ENCODE measurements at regions of chr17 and their contacts with region 1.

Region 1: GRCh38 chr17:18038861-18039534 is at the starts of genes ATPAF2 and GID4:
- DNase-seq: peak; percentile 99 to 100 (median 100)
- ATAC-seq: peak; percentile 97
- H3K4me3 ChIP-seq: peak within 1 kb of the TSS; percentile 77
- H3K4me1 ChIP-seq: peaks cover 18% of the 10 kb centered on the region
- CTCF ChIP-seq: no peak
- total RNA-seq, gene ATPAF2: 26.0 to 33.9 (median 27.2) TPM
- total RNA-seq, gene GID4: 5.8 to 24.4 (median 5.8) TPM

Region 2: DNA sequence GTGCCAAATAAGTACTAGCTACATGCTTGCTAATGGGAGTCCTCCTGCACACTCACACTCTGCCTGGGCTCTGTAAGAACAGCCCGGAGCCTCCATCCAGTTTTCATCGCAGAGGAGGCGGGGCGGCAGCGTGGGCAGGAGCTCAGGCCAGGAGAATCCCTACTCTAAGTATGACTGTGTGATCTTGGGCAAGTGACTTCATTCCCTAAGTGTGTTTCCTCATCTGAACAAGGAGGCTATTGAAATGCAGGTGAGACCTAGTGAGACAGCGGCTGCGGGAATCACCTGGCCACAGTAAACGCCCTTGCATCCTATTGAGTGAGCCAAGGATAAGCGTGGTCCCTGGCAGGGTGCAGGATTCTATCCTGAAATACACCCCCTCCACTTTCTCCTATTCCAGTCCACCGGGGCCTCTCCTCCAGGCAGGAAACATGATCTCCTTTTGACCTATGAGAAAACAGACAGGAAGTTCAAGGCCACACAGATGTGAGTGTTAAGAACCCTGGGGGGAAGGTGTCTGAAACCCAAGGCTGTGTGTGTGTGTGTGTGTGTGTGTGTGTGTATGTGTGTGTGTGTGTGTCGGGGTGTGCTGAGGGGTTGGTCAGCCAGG is 363.0 kb before region 1 on chr17:
- intact Hi-C with region 1: loop called in 1 of 2 experiments (anchors 10 kb)
- DNase-seq: peak in 2 of 3 donors; percentile 32 to 43
- ATAC-seq: peak; percentile 75
- H3K4me3 ChIP-seq: no peak overlapping the region
- H3K4me1 ChIP-seq: no peaks in the 10 kb centered on the region
- CTCF ChIP-seq: no peak

Region 3: GRCh38 chr17:17985555-17985954 is 53.4 kb before region 1 on chr17:
- intact Hi-C with region 1: loop called in 1 of 2 experiments (anchors 10 kb)
- DNase-seq: no peak
- ATAC-seq: no peak
- H3K4me3 ChIP-seq: no peak overlapping the region
- H3K4me1 ChIP-seq: no peaks in the 10 kb centered on the region
- CTCF ChIP-seq: no peak